Right ventricle myocardium inferior (tissue), 1 donor: ENCODE measurements at regions of chr22 and their contacts with region 1.

Region 1: DNA sequence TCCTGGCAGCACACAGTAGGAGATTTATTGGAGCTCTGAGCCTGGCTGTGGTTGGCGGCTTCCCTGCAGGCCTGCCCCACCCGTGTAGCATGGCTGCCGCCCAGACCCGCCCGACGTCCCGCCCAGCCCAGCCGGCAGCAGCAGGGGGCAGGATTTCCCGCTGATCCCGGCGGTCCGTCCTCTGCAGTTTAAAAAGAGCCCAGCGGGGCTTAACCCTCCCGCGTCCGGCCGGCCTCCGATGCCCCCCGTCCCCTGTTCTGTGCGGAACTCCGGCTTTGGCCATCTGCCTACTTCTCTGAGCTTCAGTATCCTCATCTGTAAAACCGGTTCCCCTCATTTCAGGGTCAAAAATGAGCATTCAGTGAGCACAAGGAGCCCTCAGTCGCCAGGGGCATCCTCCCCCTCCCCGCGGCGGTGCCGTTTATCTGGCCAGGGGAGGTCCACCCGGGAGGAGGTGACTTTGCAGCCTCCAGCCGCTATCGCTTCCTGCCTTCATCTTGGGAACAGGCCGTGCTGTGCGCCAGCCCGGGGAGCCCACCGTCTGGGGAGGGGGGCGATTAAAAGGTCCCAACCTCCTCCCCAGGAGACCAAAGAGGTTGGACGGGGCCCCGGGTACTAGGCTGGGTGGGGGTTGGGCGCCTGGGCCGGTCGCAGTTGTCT is at the start of gene GAS2L1:
- DNase-seq: peak; percentile 92
- ATAC-seq: peak; percentile 76
- total RNA-seq, gene GAS2L1: 24.3 TPM

Region 2: GRCh38 chr22:29267858-29268417 is 38.4 kb before region 1 on chr22 and contains the starts of genes EWSR1 and RHBDD3:
- intact Hi-C with region 1: loop called (anchors 2 kb)
- DNase-seq: peak; percentile 97
- ATAC-seq: peak; percentile 95
- total RNA-seq, gene EWSR1: 112 TPM
- total RNA-seq, gene RHBDD3: 11.6 TPM

Region 3: DNA sequence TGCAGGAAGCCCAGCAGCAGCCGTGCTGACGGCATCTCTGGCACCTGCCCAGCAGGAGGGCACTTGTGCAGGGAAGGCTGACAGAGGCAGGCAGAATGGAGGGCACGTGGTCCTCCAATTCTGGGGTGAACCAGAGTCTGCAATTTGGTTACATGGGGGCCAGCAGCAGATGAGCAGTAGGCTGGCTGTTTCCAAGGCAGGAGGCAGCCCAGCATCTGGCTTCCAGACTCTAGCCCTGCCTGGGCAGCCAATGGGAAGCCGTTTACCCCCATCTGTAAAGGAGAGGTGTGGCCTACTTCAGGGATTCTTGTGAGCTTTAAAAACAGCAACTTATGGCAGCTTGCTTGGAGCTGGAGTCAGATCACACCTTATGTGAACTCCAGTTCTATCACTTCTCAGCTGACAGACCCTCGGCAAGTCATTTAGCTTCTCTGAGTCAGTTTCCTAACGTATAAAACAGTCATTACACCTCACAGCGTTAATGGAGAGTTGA is 37.1 kb after region 1 on chr22:
- intact Hi-C with region 1: loop called (anchors 2 kb)
- DNase-seq: peak; percentile 75
- ATAC-seq: peak; percentile 64

Region 4: DNA sequence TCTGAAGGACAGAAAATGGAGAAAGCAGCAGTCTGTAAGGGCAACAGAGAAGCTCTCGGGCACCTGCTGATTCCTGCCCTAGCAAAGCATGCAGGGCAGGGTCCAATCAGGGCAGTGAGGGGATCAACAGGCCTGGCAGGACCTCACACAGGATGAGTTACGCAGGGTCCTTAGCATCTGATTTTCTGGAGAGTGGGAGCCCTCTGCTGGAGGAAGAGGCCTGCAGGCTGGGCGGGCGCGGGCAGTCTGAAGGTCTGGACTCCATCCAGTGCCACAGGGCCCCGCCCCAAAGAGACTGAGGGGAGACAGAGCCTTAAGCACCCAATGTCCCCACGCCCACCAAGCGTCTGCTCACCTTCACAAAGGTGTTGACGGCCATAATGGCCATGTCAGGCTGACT is 53.2 kb after region 1 on chr22:
- intact Hi-C with region 1: loop called (anchors 1 kb)
- DNase-seq: peak; percentile 72
- ATAC-seq: peak; percentile 84

Region 5: DNA sequence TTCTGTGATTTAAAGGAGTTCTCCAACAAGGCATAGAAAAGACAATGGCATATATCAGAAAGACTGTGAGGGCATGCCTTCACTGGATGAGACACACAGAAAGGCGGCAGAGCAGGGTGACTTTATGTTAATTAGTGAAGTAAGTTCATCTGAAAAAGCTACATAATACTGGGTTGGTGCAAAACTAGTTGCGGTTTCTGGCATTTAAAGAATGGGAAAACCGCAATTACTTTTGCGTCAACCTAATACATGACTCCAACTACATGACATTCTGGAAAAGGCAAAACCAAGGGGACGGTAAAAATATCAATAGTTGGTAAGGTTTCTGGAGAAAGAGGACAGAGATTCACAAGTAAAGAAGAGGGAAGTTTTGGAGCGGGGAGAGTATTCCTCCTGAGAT is 137.1 kb after region 1 on chr22:
- intact Hi-C with region 1: no loop called
- DNase-seq: no peak
- ATAC-seq: no peak